Activated naive CD4-positive, alpha-beta T cell treated with anti-CD3 and anti-CD28 coated beads for 36 hours (primary cell): ENCODE measurements at regions of chr21 and their contacts with region 1.

Region 1: DNA sequence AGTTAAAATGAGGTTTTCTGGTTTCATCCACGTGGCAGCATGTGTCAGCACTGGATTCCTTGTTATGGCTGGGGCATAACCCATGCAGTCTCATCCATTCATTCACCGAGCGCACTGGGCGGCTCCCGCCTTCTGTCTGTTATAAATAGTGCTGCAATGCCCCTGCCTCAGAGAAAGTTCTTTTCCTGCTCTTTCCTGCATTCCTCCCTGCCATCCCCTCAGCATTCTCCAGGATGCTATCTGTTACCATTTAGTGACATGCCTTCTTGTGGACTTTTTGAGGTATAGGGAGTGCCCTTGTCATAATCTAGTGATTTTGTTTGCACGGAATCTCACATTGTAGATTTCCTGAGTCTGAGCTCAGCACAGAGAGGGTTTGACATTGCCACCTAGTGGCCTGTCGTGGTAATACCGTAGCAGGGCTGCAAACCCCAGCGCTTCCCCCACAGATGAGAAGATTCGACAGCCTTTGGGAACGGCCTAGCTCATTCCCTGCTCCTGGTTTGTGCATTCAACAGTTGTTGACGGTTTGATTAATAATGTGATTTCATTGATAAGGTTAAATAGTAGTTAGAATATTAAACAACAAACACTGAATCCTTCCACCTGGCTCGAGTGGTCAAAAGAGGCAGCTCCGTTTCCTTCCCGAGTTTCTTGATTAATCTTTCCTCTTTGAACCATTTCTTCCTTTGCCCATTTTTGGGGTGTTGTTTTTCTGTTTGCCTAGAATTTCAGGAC is 46.3 kb downstream of the UMODL1 start:
- DNase-seq: peak; percentile 88
- H3K4me3 Mint-ChIP-seq: no peak overlapping the region
- H3K27ac Mint-ChIP-seq: no peak overlapping the region
- H3K4me1 Mint-ChIP-seq: peaks cover 10% of the 10 kb centered on the region
- H3K27me3 Mint-ChIP-seq: peaks cover 31% of the 10 kb centered on the region

Region 2: GRCh38 chr21:41612674-41613532 is 504.5 kb before region 1 on chr21:
- CTCF ChIA-PET with region 1: interaction called, 7 read pairs
- intact Hi-C with region 1: loop called (anchors 1 kb)
- DNase-seq: peak; percentile 35
- H3K4me3 Mint-ChIP-seq: no peak overlapping the region
- H3K27ac Mint-ChIP-seq: no peak overlapping the region
- H3K4me1 Mint-ChIP-seq: no peaks in the 10 kb centered on the region
- H3K27me3 Mint-ChIP-seq: peaks cover 25% of the 10 kb centered on the region

Region 3: GRCh38 chr21:41879190-41879998 is 238.0 kb before region 1 on chr21 and contains the start of gene PRDM15:
- CTCF ChIA-PET with region 1: interaction called, 13 read pairs
- intact Hi-C with region 1: no loop called
- DNase-seq: peak; percentile 86
- H3K4me3 Mint-ChIP-seq: peak within 1 kb of the TSS; percentile 84
- H3K27ac Mint-ChIP-seq: peak within 1 kb of the TSS; percentile 91
- H3K4me1 Mint-ChIP-seq: peaks cover 15% of the 10 kb centered on the region
- H3K27me3 Mint-ChIP-seq: no peaks in the 10 kb centered on the region
- total RNA-seq, gene PRDM15: 9.6 to 9.8 TPM

Region 4: GRCh38 chr21:41985662-41986416 is 131.6 kb before region 1 on chr21:
- CTCF ChIA-PET with region 1: interaction called, 10 read pairs
- intact Hi-C with region 1: no loop called
- DNase-seq: no peak
- H3K4me3 Mint-ChIP-seq: no peak overlapping the region
- H3K27ac Mint-ChIP-seq: no peak overlapping the region
- H3K4me1 Mint-ChIP-seq: no peaks in the 10 kb centered on the region
- H3K27me3 Mint-ChIP-seq: peaks cover 3% of the 10 kb centered on the region

Region 5: DNA sequence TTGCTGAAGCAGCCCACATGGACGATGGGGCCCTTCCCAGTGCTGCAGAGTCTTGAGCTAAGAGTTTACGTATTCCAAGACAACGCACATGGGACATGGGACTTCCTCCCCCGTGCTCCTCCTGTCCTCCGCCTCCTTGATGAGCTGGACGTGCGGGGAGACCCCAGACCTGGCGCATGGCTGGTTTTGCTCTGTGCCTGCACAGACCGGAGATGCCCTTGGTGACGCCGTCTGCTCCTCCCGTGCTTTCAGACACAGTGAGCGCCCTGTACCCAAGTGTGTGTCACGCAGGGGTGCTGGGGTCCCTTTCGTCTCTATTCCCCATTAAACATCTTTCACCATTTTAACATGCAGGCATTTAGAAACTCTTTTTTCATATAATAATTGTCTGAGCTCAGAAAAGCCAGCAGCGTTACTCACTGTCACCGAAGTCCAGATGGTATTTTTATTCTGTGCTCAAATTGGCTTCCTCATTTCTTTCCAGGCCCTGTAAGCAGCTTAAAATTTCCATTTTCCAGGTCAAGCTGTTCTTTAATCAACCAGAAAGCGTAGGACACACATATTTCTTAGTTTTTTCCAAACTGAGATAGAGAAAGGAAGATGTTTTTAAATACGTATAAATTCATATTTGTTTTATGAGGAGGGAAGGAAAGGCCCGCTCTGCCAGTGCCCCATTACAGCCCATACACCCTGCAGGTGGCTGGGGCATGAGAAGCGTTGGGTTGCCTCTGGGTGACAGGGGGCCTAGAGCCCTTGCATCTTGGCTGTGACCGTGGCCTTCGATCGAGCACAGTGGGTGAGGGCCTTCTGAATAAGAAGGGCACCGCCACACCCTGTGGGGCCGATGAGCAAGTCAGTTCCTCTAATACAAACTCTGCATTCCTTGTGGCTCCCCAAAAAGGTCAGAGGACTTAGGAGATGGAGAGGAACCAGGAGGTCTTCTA is 89.3 kb before region 1 on chr21:
- CTCF ChIA-PET with region 1: no interaction called
- intact Hi-C with region 1: no loop called
- DNase-seq: no peak
- H3K4me3 Mint-ChIP-seq: no peak overlapping the region
- H3K27ac Mint-ChIP-seq: no peak overlapping the region
- H3K4me1 Mint-ChIP-seq: no peaks in the 10 kb centered on the region
- H3K27me3 Mint-ChIP-seq: no peaks in the 10 kb centered on the region

Region 6: GRCh38 chr21:42248783-42249597 is 131.6 kb after region 1 on chr21:
- CTCF ChIA-PET with region 1: no interaction called
- intact Hi-C with region 1: no loop called
- DNase-seq: no peak
- H3K4me3 Mint-ChIP-seq: no peak overlapping the region
- H3K27ac Mint-ChIP-seq: no peak overlapping the region
- H3K4me1 Mint-ChIP-seq: peaks cover 6% of the 10 kb centered on the region
- H3K27me3 Mint-ChIP-seq: no peaks in the 10 kb centered on the region

Region 7: GRCh38 chr21:42424914-42425541 is 307.6 kb after region 1 on chr21:
- CTCF ChIA-PET with region 1: no interaction called
- intact Hi-C with region 1: no loop called
- DNase-seq: peak; percentile 75
- H3K4me3 Mint-ChIP-seq: peak overlapping the region; percentile 44
- H3K27ac Mint-ChIP-seq: peak overlapping the region; percentile 61
- H3K4me1 Mint-ChIP-seq: peaks cover 67% of the 10 kb centered on the region
- H3K27me3 Mint-ChIP-seq: no peaks in the 10 kb centered on the region